HepG2 (cell line): ENCODE measurements at regions of chr7 and their contacts with region 1.

Region 1: DNA sequence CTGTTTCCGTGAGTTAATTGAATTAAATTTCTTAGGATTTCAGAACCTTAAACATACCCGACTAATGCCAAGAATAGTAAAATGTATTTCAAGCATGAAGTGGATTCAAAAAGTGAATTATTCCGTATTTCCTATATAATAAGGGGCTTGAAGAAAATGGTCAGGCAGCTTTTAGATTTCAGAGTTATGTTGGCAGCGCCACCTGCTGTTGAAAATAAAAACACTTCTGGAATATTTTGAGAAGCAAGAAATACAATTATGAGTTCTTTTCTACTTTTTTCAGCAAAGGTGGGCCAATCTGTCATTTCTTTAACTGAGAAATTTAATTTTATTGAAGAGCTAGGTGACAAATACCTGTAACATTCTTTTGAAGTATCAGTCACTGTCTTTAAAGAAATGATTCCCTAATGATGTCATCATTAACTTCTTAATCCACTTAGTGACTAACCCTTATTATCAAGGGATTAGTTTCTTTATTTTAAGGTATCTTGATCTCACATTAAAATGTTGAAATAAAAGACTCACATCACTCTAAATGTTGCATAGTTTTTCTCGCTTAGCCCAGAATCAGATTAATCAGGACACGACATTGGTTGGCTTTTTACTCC is 36.6 kb upstream of the AGR3 start:
- DNase-seq: peak; percentile 31
- ATAC-seq: no peak
- H3K4me3 ChIP-seq: no peak overlapping the region
- H3K27ac ChIP-seq: no peak overlapping the region
- H3K4me1 ChIP-seq: peaks cover 25% of the 10 kb centered on the region
- H3K27me3 ChIP-seq: no peaks in the 10 kb centered on the region
- CTCF ChIP-seq: peak; percentile 55
- EP300 ChIP-seq: no peak
- POLR2A ChIP-seq: no peak
- RAD21 ChIP-seq: peak; percentile 26; the same call in 1 of the 2 replicates

Region 2: DNA sequence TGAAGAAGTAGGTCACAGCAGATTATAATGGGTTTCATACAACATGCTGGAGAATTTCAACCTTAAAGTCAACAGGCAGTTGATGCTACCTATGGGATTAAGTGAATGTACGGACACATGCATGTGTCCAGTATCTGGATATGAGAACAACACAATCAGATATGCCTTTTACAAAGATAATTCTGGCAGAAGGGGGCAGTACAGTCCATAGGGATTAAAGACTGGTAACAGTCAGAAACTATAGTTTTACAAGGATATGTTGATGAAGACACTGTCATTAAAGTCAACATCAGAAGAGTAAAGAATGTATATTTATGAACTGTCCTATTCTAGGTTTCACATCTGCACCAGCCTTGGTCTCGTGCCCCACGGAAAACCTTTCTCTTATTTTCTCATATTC is 314.3 kb before region 1 on chr7:
- CTCF ChIA-PET with region 1: no interaction called
- POLR2A ChIA-PET with region 1: no interaction called
- in situ Hi-C with region 1: no loop called
- intact Hi-C with region 1: loop called (anchors 5 kb)
- DNase-seq: peak; percentile 10
- ATAC-seq: no peak
- H3K4me3 ChIP-seq: no peak overlapping the region
- H3K27ac ChIP-seq: no peak overlapping the region
- H3K4me1 ChIP-seq: no peaks in the 10 kb centered on the region
- H3K27me3 ChIP-seq: no peaks in the 10 kb centered on the region
- CTCF ChIP-seq: no peak
- EP300 ChIP-seq: no peak
- POLR2A ChIP-seq: no peak
- RAD21 ChIP-seq: no peak

Region 3: DNA sequence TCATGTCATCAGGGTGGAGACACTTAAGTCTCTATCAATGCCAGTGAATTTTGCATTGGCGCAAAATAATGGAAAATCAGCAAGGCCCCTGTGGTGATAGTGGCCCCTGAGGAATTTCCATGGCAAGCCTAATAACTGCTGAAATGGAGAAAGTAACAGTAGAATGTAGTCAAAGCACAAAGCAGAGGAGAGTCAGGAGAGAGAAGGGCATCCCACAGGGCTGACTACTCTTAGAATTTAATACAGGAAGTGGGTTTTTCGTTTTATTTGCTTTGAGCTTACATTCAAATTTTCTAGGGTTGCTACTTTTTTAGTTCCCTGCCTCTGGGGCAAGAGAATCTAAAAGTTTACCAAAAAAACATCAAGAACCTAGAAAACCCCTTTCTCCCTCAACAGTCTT is 233.5 kb before region 1 on chr7:
- CTCF ChIA-PET with region 1: no interaction called
- POLR2A ChIA-PET with region 1: no interaction called
- in situ Hi-C with region 1: no loop called
- intact Hi-C with region 1: no loop called
- DNase-seq: no peak
- ATAC-seq: no peak
- H3K4me3 ChIP-seq: no peak overlapping the region
- H3K27ac ChIP-seq: no peak overlapping the region
- H3K4me1 ChIP-seq: no peaks in the 10 kb centered on the region
- H3K27me3 ChIP-seq: no peaks in the 10 kb centered on the region
- CTCF ChIP-seq: no peak
- EP300 ChIP-seq: no peak
- POLR2A ChIP-seq: no peak
- RAD21 ChIP-seq: no peak

Region 4: DNA sequence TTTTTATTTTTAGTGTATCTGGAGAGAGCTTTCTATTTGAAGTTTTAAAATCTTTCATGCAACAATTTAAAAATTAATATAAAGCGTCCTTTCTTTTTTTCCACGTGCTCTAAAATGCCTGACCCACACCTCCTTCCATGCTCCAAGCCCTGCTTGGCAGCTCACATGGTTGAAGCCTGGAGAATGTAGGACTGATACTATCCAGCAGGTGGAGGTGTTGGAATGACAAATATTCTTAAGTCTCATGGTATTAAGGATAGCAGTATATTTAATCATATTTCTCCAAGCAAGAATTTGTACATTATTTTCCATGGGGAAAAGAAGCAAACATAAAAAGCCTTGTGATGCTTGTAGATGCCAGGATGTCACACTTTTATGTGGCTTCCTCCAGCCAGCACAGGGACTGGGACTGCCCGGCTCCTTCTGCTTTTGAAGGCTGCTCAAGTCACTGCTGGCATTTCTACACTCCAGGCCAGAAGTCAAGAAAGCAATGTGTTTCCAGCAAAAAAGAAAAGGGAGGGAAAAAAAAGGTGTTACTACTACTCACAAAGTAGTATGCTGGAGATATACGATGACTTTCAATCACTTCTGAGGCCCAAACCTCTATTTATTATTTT is 222.7 kb before region 1 on chr7:
- CTCF ChIA-PET with region 1: interaction called, 7 read pairs
- POLR2A ChIA-PET with region 1: no interaction called
- in situ Hi-C with region 1: no loop called
- intact Hi-C with region 1: loop called (anchors 1 kb)
- DNase-seq: peak; percentile 40
- ATAC-seq: peak; percentile 90
- H3K4me3 ChIP-seq: no peak overlapping the region
- H3K27ac ChIP-seq: no peak overlapping the region
- H3K4me1 ChIP-seq: no peaks in the 10 kb centered on the region
- H3K27me3 ChIP-seq: no peaks in the 10 kb centered on the region
- CTCF ChIP-seq: peak; percentile 63
- EP300 ChIP-seq: no peak
- POLR2A ChIP-seq: no peak
- RAD21 ChIP-seq: no peak

Region 5: GRCh38 chr7:16801111-16801542 is 117.3 kb before region 1 on chr7:
- CTCF ChIA-PET with region 1: interaction called, 15 read pairs
- POLR2A ChIA-PET with region 1: no interaction called
- in situ Hi-C with region 1: loop called (anchors 5 kb)
- intact Hi-C with region 1: loop called (anchors 2 kb)
- DNase-seq: peak; percentile 27
- ATAC-seq: peak; percentile 59
- H3K4me3 ChIP-seq: no peak overlapping the region
- H3K27ac ChIP-seq: no peak overlapping the region
- H3K4me1 ChIP-seq: peaks cover 23% of the 10 kb centered on the region
- H3K27me3 ChIP-seq: no peaks in the 10 kb centered on the region
- CTCF ChIP-seq: peak; percentile 43
- EP300 ChIP-seq: no peak
- POLR2A ChIP-seq: no peak
- RAD21 ChIP-seq: no peak

Region 6: GRCh38 chr7:16891338-16891737 is 27.1 kb before region 1 on chr7:
- CTCF ChIA-PET with region 1: interaction called, 17 read pairs
- POLR2A ChIA-PET with region 1: no interaction called
- in situ Hi-C with region 1: no loop called
- intact Hi-C with region 1: loop called (anchors 1 kb)
- DNase-seq: peak; percentile 63
- ATAC-seq: peak; percentile 94
- H3K4me3 ChIP-seq: no peak overlapping the region
- H3K27ac ChIP-seq: no peak overlapping the region
- H3K4me1 ChIP-seq: no peaks in the 10 kb centered on the region
- H3K27me3 ChIP-seq: no peaks in the 10 kb centered on the region
- CTCF ChIP-seq: peak; percentile 84
- EP300 ChIP-seq: no peak
- POLR2A ChIP-seq: no peak
- RAD21 ChIP-seq: peak; percentile 80